Mammary epithelial cell (primary cell): ENCODE measurements at regions of chr12 and their contacts with region 1.

Region 1: GRCh38 chr12:124321040-124321481 is 26.2 kb downstream of the RFLNA start:
- DNase-seq: peak; percentile 48
- H3K4me3 ChIP-seq: no peak overlapping the region
- H3K27ac ChIP-seq: no peak overlapping the region
- H3K4me1 ChIP-seq: no peaks in the 10 kb centered on the region
- H3K27me3 ChIP-seq: no peaks in the 10 kb centered on the region
- CTCF ChIP-seq: peak; percentile 96 to 97

Region 2: DNA sequence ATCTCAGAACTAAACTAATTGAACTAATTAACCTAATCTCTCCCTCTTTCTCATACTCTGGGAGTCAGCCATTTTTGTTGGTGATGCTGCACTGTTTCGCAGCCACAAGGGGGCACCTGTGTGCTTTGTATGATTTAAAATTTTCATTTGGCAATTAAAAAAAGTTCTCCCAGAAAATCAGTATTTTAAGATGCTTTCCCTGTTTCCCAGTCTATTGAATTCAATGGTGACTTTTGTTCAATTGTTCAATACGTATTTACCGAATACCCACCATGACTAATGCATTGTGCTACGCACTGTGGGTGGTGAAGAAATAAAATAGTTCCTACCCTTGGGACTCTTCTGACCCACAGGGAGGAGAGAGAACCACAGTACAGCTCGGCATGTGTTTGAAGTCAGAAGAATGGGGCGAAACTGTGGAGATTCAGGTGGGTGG is 284.4 kb before region 1 on chr12:
- CTCF ChIA-PET with region 1: no interaction called
- dilution Hi-C with region 1: loop called (anchors 5 kb)
- in situ Hi-C with region 1: loop called in 1 of 2 experiments (anchors 5 kb)
- intact Hi-C with region 1: loop called (anchors 1 kb)
- DNase-seq: no peak
- H3K4me3 ChIP-seq: no peak overlapping the region
- H3K27ac ChIP-seq: no peak overlapping the region
- H3K4me1 ChIP-seq: no peaks in the 10 kb centered on the region
- H3K27me3 ChIP-seq: no peaks in the 10 kb centered on the region
- CTCF ChIP-seq: peak; percentile 82 to 95

Region 3: GRCh38 chr12:124044809-124045321 is 276.2 kb before region 1 on chr12:
- CTCF ChIA-PET with region 1: no interaction called
- dilution Hi-C with region 1: no loop called
- in situ Hi-C with region 1: loop called (anchors 5 kb)
- intact Hi-C with region 1: no loop called
- DNase-seq: peak; percentile 81
- H3K4me3 ChIP-seq: peak overlapping the region in 1 of 3 experiments; percentile 30
- H3K27ac ChIP-seq: no peak overlapping the region
- H3K4me1 ChIP-seq: peaks cover 24% of the 10 kb centered on the region
- H3K27me3 ChIP-seq: no peaks in the 10 kb centered on the region
- CTCF ChIP-seq: no peak

Region 4: GRCh38 chr12:124053851-124054250 is 267.2 kb before region 1 on chr12:
- CTCF ChIA-PET with region 1: interaction called, 4 read pairs
- dilution Hi-C with region 1: no loop called
- in situ Hi-C with region 1: loop called in 1 of 2 experiments (anchors 5 kb)
- intact Hi-C with region 1: loop called (anchors 1 kb)
- DNase-seq: no peak
- H3K4me3 ChIP-seq: no peak overlapping the region
- H3K27ac ChIP-seq: no peak overlapping the region
- H3K4me1 ChIP-seq: no peaks in the 10 kb centered on the region
- H3K27me3 ChIP-seq: no peaks in the 10 kb centered on the region
- CTCF ChIP-seq: peak; percentile 37 to 56

Region 5: GRCh38 chr12:124162151-124162989 is 158.7 kb before region 1 on chr12:
- CTCF ChIA-PET with region 1: no interaction called
- dilution Hi-C with region 1: no loop called
- in situ Hi-C with region 1: no loop called
- intact Hi-C with region 1: loop called (anchors 1 kb)
- DNase-seq: peak; percentile 19
- H3K4me3 ChIP-seq: no peak overlapping the region
- H3K27ac ChIP-seq: no peak overlapping the region
- H3K4me1 ChIP-seq: no peaks in the 10 kb centered on the region
- H3K27me3 ChIP-seq: no peaks in the 10 kb centered on the region
- CTCF ChIP-seq: peak in 1 of 2 donors; percentile 29